Psoas muscle (tissue), 8 donors: ENCODE measurements at regions of chrX and their contacts with region 1.

Region 1: GRCh38 chrX:53224860-53225797 is at the start of gene KDM5C:
- DNase-seq: peak; percentile 95 to 97
- ATAC-seq: peak; percentile 80 to 87 (median 84)
- H3K4me3 ChIP-seq: peak within 1 kb of the TSS; percentile 97
- H3K27ac ChIP-seq: peak within 1 kb of the TSS; percentile 95
- H3K4me1 ChIP-seq: peaks cover 20% of the 10 kb centered on the region
- H3K27me3 ChIP-seq: no peaks in the 10 kb centered on the region
- CTCF ChIP-seq: no peak
- total RNA-seq, gene KDM5C: 62.2 to 119 (median 96.0) TPM

Region 2: GRCh38 chrX:53018627-53019026 is 206.5 kb before region 1 on chrX:
- intact Hi-C with region 1: no loop called
- DNase-seq: no peak
- ATAC-seq: no peak
- H3K4me3 ChIP-seq: no peak overlapping the region
- H3K27ac ChIP-seq: no peak overlapping the region
- H3K4me1 ChIP-seq: no peaks in the 10 kb centered on the region
- H3K27me3 ChIP-seq: peaks cover 0 to 72% (median 0%) of the 10 kb centered on the region in 3 donors
- CTCF ChIP-seq: no peak

Region 3: DNA sequence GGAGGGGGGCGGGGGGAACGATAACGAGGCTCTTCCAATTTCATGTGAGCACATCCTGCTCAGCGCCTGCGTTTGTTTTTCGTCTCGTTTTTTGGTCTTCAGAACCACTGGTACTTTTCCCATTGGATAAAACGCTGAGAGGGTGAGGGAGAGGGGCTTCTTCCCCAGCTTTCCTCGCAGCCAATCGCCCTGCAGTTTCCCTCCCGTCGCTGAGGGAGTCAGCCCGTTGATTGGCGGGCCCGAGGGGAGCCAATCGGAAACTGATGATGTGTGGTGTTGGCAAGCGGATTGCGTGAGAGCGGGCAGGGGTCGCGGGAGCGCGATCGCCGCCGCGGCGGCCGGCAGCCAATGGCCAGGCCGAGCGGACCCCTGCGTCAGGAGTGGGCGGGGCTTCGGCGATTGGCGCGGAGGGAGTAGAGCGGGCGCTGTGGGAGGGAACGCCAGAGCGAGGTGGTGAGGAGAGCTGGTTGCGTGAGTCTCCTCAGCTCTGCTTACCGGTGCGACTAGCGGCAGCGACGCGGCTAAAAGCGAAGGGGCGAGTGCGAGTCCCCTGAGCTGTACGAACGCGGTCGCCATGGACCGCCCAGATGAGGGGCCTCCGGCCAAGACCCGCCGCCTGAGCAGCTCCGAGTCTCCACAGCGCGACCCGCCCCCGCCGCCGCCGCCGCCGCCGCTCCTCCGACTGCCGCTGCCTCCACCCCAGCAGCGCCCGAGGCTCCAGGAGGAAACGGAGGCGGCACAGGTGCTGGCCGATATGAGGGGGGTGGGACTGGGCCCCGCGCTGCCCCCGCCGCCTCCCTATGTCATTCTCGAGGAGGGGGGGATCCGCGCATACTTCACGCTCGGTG is 143.0 kb before region 1 on chrX and contains the start of gene TSPYL2:
- intact Hi-C with region 1: loop called in 1 of 2 experiments (anchors 10 kb)
- DNase-seq: peak; percentile 94 to 97
- ATAC-seq: peak; percentile 94 to 98 (median 96)
- H3K4me3 ChIP-seq: peak within 1 kb of the TSS; percentile 73
- H3K27ac ChIP-seq: peak within 1 kb of the TSS; percentile 81
- H3K4me1 ChIP-seq: no peaks in the 10 kb centered on the region
- H3K27me3 ChIP-seq: peaks cover 0 to 31% (median 0%) of the 10 kb centered on the region in 3 donors
- CTCF ChIP-seq: no peak
- total RNA-seq, gene TSPYL2: 20.0 to 56.4 (median 28.1) TPM

Region 4: DNA sequence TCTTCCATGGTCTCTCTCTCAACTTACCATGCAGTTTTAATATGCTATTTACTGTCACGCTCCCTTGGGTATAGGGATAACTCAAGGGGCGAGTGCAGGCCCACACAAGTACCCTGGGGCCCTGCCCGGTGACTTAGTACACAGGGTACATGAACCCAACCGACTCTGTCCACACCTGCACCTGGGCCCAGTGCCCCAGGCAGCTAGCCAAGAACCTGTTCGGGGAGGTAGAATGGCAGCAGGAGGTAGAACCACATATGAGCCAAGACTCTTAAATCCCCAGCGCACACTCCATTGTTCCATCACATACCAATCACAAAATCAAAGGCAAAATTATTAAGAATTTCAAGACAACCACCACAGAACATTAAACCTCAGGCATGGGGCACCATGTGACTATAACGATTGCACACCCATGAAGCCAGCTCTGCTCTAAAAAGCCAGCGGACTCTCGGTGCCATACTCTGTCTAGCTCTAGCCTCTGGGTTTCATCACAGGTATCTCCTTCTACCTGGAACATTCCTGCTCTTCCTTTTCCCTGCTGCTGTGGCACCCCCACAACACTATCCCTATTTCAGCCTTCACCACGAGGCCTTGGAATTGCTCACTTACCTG is 804.5 kb after region 1 on chrX:
- intact Hi-C with region 1: no loop called
- DNase-seq: no peak
- ATAC-seq: no peak
- H3K4me3 ChIP-seq: no peak overlapping the region
- H3K27ac ChIP-seq: no peak overlapping the region
- H3K4me1 ChIP-seq: no peaks in the 10 kb centered on the region
- H3K27me3 ChIP-seq: peaks cover 0 to 4% (median 0%) of the 10 kb centered on the region in 3 donors
- CTCF ChIP-seq: no peak